PC-9 (cell line): ENCODE measurements at regions of chr4 and their contacts with region 1.

Region 1: GRCh38 chr4:100063355-100063754 is 113.3 kb upstream of the H2AZ1 start:
- DNase-seq: no peak
- H3K4me3 ChIP-seq: no peak overlapping the region
- H3K27ac ChIP-seq: no peak overlapping the region
- H3K4me1 ChIP-seq: no peaks in the 10 kb centered on the region
- H3K27me3 ChIP-seq: no peaks in the 10 kb centered on the region
- CTCF ChIP-seq: peak; percentile 53

Region 2: DNA sequence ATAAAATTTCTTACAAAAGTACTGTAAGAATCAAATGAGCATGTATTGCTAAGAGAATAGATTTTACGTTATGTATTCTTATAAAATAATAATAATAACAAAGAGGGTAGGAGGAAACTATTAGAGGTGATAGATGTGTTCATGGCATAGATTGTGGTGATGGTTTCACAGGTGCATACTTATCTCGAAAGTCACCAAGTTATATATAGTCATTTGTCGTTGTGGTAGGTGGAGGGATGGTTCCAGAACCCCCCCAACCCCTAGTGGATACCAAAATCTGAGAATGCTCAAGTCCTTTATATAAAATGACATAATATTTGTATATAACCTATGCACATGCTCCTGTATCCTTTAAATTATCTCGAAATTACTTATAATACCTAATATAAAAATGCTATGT is 76.6 kb before region 1 on chr4:
- CTCF ChIA-PET with region 1: interaction called, 10 read pairs
- POLR2A ChIA-PET with region 1: no interaction called
- intact Hi-C with region 1: no loop called
- DNase-seq: no peak
- H3K4me3 ChIP-seq: no peak overlapping the region
- H3K27ac ChIP-seq: no peak overlapping the region
- H3K4me1 ChIP-seq: no peaks in the 10 kb centered on the region
- H3K27me3 ChIP-seq: no peaks in the 10 kb centered on the region
- CTCF ChIP-seq: no peak

Region 3: GRCh38 chr4:100707786-100708185 is 644.4 kb after region 1 on chr4:
- CTCF ChIA-PET with region 1: no interaction called
- POLR2A ChIA-PET with region 1: no interaction called
- intact Hi-C with region 1: no loop called
- DNase-seq: no peak
- H3K4me3 ChIP-seq: no peak overlapping the region
- H3K27ac ChIP-seq: no peak overlapping the region
- H3K4me1 ChIP-seq: no peaks in the 10 kb centered on the region
- H3K27me3 ChIP-seq: no peaks in the 10 kb centered on the region
- CTCF ChIP-seq: no peak

Region 4: GRCh38 chr4:100736641-100737451 is 673.5 kb after region 1 on chr4:
- CTCF ChIA-PET with region 1: no interaction called
- POLR2A ChIA-PET with region 1: no interaction called
- intact Hi-C with region 1: no loop called
- DNase-seq: peak in 1 of 2 experiments; percentile 38
- H3K4me3 ChIP-seq: no peak overlapping the region
- H3K27ac ChIP-seq: 0 out of 2 replicates have a peak overlapping the region, but pooled peaks have one; percentile 16
- H3K4me1 ChIP-seq: peaks cover 14% of the 10 kb centered on the region
- H3K27me3 ChIP-seq: no peaks in the 10 kb centered on the region
- CTCF ChIP-seq: no peak